Spleen (tissue), 13 donors: ENCODE measurements at regions of chr1 and their contacts with region 1.

Region 1: GRCh38 chr1:207084701-207085180 is 3.9 kb upstream of the C4BPB start:
- DNase-seq: no peak
- H3K4me3 ChIP-seq: no peak overlapping the region
- H3K27ac ChIP-seq: no peak overlapping the region
- H3K4me1 ChIP-seq: peaks cover 0 to 26% (median 10%) of the 10 kb centered on the region in 6 donors
- H3K27me3 ChIP-seq: no peaks in the 10 kb centered on the region
- CTCF ChIP-seq: peak; percentile 44 to 80 (median 74)
- POLR2A ChIP-seq: no peak

Region 2: GRCh38 chr1:207032528-207033017 is 52.2 kb before region 1 on chr1 and contains the start of gene C1orf116:
- intact Hi-C with region 1: no loop called
- DNase-seq: no peak
- H3K4me3 ChIP-seq: no peak within 1 kb of the TSS
- H3K27ac ChIP-seq: peak within 1 kb of the TSS in 4 of 8 donors; percentile 25 to 57 (median 43)
- H3K4me1 ChIP-seq: peaks cover 0 to 10% (median 0%) of the 10 kb centered on the region in 6 donors
- H3K27me3 ChIP-seq: peaks cover 0 to 17% (median 0%) of the 10 kb centered on the region in 7 donors
- CTCF ChIP-seq: no peak
- POLR2A ChIP-seq: no peak
- total RNA-seq, gene C1orf116: 0.09 to 1.0 (median 0.28) TPM

Region 3: GRCh38 chr1:207181838-207182237 is 97.1 kb after region 1 on chr1:
- intact Hi-C with region 1: loop called (anchors 5 kb)
- DNase-seq: no peak
- H3K4me3 ChIP-seq: no peak overlapping the region
- H3K27ac ChIP-seq: no peak overlapping the region
- H3K4me1 ChIP-seq: no peaks in the 10 kb centered on the region
- H3K27me3 ChIP-seq: no peaks in the 10 kb centered on the region
- CTCF ChIP-seq: peak in 2 of 11 experiments; percentile 10 to 14
- POLR2A ChIP-seq: no peak

Region 4: DNA sequence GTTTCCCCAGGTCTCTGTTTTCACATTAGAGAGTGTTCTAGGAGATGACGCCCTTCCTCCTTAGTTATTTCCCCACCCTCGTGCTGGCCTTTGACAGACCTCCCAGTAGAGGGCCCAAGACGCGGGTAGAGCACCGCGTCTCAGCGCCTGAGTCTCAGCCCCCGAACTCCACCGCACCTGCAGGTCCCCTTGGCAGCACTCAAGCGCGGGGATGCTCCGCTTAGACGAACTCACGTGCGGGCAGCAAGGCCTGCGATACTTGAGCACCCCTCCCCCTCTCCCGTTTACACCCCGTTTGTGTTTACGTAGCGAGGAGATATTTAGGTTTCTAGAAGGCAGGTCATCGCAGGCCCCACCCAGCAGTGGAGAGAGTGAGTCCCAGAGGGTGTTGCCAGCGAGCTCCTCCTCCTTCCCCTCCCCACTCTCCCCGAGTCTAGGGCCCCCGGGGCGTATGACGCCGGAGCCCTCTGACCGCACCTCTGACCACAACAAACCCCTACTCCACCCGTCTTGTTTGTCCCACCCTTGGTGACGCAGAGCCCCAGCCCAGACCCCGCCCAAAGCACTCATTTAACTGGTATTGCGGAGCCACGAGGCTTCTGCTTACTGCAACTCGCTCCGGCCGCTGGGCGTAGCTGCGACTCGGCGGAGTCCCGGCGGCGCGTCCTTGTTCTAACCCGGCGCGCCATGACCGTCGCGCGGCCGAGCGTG is 236.5 kb after region 1 on chr1 and contains the start of gene CD55:
- intact Hi-C with region 1: loop called (anchors 5 kb)
- DNase-seq: peak; percentile 99
- H3K4me3 ChIP-seq: peak within 1 kb of the TSS; percentile 60 to 83 (median 72)
- H3K27ac ChIP-seq: peak within 1 kb of the TSS; percentile 94 to 100 (median 99)
- H3K4me1 ChIP-seq: peaks cover 21 to 82% (median 48%) of the 10 kb centered on the region in 6 donors
- H3K27me3 ChIP-seq: no peaks in the 10 kb centered on the region
- CTCF ChIP-seq: peak in 8 of 11 experiments; percentile 24 to 54 (median 46)
- POLR2A ChIP-seq: peak; percentile 93 to 97 (median 95)
- total RNA-seq, gene CD55: 97.0 to 229 (median 116) TPM

Region 5: DNA sequence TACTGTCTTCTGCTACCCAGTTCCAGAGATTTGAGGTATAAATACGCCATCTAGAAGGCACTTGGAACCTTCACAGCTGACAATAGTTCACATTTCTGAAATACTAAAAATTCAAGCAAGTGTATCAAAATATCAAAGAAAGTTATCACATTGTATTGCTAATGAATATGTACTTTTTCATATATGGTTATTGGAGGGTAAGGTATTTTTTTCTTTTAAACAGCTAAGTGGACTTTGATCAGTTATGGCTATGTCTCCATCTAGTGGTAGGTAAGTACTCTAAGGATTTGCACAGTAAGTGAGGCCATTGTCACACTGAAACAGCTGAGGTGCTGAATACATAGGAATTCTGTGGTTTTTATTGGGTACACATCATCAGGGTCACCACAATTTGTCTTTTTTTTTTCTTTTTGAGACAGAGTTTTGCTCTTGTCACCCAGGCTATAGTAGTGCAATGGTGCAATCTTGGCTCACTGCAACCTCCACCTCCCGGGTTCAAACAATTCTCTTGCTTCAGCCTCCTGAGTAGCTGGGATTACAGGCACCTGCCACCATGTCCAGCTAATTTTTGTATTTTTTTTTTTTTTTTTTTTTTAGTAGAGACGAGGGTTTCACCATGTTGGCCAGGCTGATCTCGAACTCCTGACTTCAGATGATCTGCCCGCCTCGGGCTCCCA is 320.2 kb after region 1 on chr1:
- intact Hi-C with region 1: loop called (anchors 5 kb)
- DNase-seq: no peak
- H3K4me3 ChIP-seq: no peak overlapping the region
- H3K27ac ChIP-seq: peak overlapping the region in 1 of 8 donors; percentile 9
- H3K4me1 ChIP-seq: peaks cover 3 to 47% (median 20%) of the 10 kb centered on the region in 6 donors
- H3K27me3 ChIP-seq: no peaks in the 10 kb centered on the region
- CTCF ChIP-seq: peak; percentile 70 to 91 (median 83)
- POLR2A ChIP-seq: no peak

Region 6: DNA sequence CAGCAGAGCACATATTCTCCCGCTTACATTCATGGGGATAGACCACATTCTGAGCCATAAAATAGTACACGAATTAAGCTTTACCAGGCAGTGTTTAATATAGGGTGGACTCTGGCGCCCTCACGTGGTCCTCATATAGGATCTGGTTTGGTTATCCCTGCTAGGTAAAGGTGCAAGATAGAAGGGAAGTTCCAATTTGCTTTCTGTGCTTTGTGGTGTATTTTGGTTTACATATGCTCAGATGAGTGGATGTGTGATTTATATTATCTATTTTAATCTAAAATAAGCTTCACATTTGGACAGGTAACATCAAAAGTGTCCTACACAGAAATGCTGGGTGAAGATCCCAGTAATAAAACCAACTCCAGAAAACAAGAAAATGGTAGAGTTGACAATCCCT is 414.8 kb after region 1 on chr1:
- intact Hi-C with region 1: loop called (anchors 5 kb)
- DNase-seq: peak; percentile 86
- H3K4me3 ChIP-seq: peak overlapping the region in 1 of 8 donors; percentile 3
- H3K27ac ChIP-seq: peak overlapping the region in 2 of 8 donors; percentile 96 to 98
- H3K4me1 ChIP-seq: peaks cover 0 to 70% (median 18%) of the 10 kb centered on the region in 6 donors
- H3K27me3 ChIP-seq: peaks cover 0 to 32% (median 0%) of the 10 kb centered on the region in 7 donors
- CTCF ChIP-seq: peak; percentile 50 to 79 (median 76)
- POLR2A ChIP-seq: no peak